ENCODE measurements at regions of chr1 and their contacts with region 1.

Region 1: GRCh38 chr1:246012341-246012740 is 494.7 kb downstream of the SMYD3 start:
- DNase-seq: peak; percentile 11
- H3K4me3 Mint-ChIP-seq: no peak overlapping the region
- H3K27ac Mint-ChIP-seq: no peak overlapping the region
- H3K4me1 Mint-ChIP-seq: no peaks in the 10 kb centered on the region
- H3K27me3 Mint-ChIP-seq: no peaks in the 10 kb centered on the region

Region 2: GRCh38 chr1:246117066-246117791 is 104.9 kb after region 1 on chr1:
- CTCF ChIA-PET with region 1: no interaction called
- intact Hi-C with region 1: loop called (anchors 1 kb)
- DNase-seq: peak; percentile 45
- H3K4me3 Mint-ChIP-seq: peak overlapping the region; percentile 3
- H3K27ac Mint-ChIP-seq: peak overlapping the region; percentile 42
- H3K4me1 Mint-ChIP-seq: peaks cover 19% of the 10 kb centered on the region
- H3K27me3 Mint-ChIP-seq: no peaks in the 10 kb centered on the region

Region 3: GRCh38 chr1:246280551-246280950 is 268.2 kb after region 1 on chr1:
- CTCF ChIA-PET with region 1: no interaction called
- intact Hi-C with region 1: loop called (anchors 1 kb)
- DNase-seq: peak; percentile 7
- H3K4me3 Mint-ChIP-seq: no peak overlapping the region
- H3K27ac Mint-ChIP-seq: no peak overlapping the region
- H3K4me1 Mint-ChIP-seq: peaks cover 3% of the 10 kb centered on the region
- H3K27me3 Mint-ChIP-seq: no peaks in the 10 kb centered on the region

Region 4: DNA sequence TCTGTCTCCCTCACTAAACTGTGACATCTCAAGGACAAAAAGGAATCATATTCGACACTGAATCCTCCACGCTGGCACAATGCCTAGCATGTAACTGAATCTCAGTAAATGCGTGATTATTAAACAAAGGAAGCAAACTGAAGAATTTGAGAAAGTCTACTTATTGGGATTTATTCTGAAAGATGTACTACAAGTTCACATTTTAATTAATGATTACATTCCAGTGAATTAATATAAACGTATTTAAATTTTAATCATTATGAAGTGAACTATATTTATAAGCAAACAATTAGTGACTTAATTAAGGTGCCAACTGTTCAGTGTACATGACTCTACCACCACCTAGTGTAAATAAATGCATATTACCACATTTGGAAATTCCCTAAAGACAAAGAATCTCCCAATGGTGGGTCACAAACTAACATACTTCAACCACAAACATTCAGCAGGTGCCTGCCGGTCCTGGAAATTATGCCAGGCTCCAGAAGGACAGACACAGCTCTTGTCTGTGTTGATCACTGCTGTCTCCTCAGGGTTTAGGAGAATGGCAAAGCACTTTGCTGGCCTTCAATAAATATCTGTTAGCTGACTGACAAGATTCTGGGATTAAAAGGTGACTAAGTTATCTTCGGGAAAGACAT is 438.4 kb after region 1 on chr1:
- CTCF ChIA-PET with region 1: interaction called, 6 read pairs
- intact Hi-C with region 1: loop called (anchors 1 kb)
- DNase-seq: no peak
- H3K4me3 Mint-ChIP-seq: no peak overlapping the region
- H3K27ac Mint-ChIP-seq: no peak overlapping the region
- H3K4me1 Mint-ChIP-seq: peaks cover 3% of the 10 kb centered on the region
- H3K27me3 Mint-ChIP-seq: no peaks in the 10 kb centered on the region

Measured in activated naive CD4-positive, alpha-beta T cell treated with anti-CD3 and anti-CD28 coated beads for 36 hours (primary cell).